Activated T-helper 2 cell treated with anti-CD3 and anti-CD28 coated beads, Interferon-gamma antibody, Interleukin-2, Interleukin-4, amounts not matched to agents 10 μg/mL and 5 μg/mL and 100 μg/mL, durations not matched to agents 14 hours and 24 hours and 36 hours (primary cell): ENCODE measurements at regions of chr3 and their contacts with region 1.

Region 1: DNA sequence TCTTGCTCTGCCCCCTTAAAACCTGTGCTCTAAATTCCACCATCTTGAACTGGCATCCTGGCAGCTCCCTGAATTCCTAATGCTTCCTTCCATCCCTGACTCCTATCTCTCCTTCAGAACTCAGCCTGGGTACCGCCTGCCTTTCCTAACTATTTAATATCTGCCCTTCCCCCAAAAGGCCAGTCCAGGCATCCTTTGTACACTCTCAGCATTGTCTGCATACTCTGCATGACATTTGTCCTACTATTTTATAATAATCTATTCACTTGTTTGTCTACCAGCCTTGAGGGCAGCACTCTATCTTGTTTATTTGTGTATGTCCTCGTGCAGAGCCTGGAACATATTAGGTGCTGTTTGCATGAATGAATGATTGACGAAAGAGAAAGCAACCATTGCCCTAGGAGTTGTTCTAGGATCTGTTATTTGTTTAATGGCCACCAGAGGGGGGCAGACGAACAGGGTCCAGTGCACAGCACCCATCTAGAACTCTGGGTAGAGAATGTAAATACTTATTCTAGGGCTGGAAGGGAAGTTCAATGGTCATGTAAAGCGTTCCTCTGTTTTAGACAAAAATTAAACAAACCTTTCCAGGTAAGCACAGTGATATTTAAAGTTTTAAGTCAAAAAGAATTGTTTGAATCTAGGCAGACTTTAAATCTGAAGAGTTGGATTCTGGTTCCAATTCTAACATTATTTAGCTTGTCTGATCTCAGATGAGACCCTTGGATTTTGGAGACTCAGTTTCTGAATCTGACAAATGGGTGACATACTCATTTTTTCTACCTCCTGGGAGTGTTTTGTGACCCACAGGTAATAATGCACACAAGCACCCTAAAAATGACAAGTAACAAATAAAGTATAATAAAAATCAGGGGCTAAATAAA is 125.8 kb upstream of the GALNT15 start:
- DNase-seq: peak; percentile 16
- H3K4me3 Mint-ChIP-seq: no peak overlapping the region
- H3K27ac Mint-ChIP-seq: no peak overlapping the region
- H3K4me1 Mint-ChIP-seq: peaks cover 8% of the 10 kb centered on the region
- H3K27me3 Mint-ChIP-seq: peaks cover 2% of the 10 kb centered on the region

Region 2: GRCh38 chr3:15846606-15847005 is 202.1 kb before region 1 on chr3:
- intact Hi-C with region 1: no loop called
- DNase-seq: no peak
- H3K4me3 Mint-ChIP-seq: no peak overlapping the region
- H3K27ac Mint-ChIP-seq: no peak overlapping the region
- H3K4me1 Mint-ChIP-seq: peaks cover 31% of the 10 kb centered on the region
- H3K27me3 Mint-ChIP-seq: no peaks in the 10 kb centered on the region

Region 3: DNA sequence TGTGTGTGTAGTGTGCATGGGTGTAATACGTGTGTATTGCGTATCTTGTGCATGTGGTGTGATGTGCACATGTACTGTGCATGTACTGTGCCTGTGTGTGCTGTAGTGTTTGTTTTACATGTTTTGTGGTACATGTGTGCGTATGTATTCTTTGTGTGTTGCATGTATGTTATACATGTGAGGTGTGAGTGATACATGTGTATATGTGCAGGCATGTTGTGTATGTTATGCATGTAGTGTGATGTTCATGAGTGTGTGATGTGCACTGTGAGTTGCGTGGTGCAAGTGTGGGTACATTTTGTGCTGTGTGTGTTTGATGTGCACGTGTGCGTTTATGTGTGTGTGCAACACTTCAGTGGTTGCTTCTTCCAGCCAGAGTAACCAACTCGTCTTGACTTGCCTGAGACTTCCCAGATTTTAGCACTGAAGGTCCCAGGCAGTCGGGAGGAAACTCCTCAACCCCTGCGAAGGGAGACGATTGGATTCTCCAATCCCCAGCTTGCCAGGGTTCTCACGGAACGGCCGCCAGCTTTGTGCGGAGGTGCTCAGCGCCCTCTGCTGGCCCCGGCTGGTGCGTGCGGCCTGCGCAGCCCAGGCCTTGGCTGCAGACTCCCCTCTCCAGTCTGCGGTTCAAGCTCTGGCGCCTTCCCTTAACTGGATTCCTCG is 129.4 kb after region 1 on chr3:
- intact Hi-C with region 1: loop called (anchors 1 kb)
- DNase-seq: peak; percentile 45
- H3K4me3 Mint-ChIP-seq: no peak overlapping the region
- H3K27ac Mint-ChIP-seq: no peak overlapping the region
- H3K4me1 Mint-ChIP-seq: peaks cover 3% of the 10 kb centered on the region
- H3K27me3 Mint-ChIP-seq: peaks cover 22% of the 10 kb centered on the region

Region 4: GRCh38 chr3:16247276-16248061 is 198.8 kb after region 1 on chr3:
- intact Hi-C with region 1: loop called (anchors 1 kb)
- DNase-seq: peak; percentile 67
- H3K4me3 Mint-ChIP-seq: no peak overlapping the region
- H3K27ac Mint-ChIP-seq: no peak overlapping the region
- H3K4me1 Mint-ChIP-seq: peaks cover 18% of the 10 kb centered on the region
- H3K27me3 Mint-ChIP-seq: no peaks in the 10 kb centered on the region